Activated B cell treated with CpG ODN at 0.5 μM for 24 hours (primary cell): ENCODE measurements at regions of chr21 and their contacts with region 1.

Region 1: DNA sequence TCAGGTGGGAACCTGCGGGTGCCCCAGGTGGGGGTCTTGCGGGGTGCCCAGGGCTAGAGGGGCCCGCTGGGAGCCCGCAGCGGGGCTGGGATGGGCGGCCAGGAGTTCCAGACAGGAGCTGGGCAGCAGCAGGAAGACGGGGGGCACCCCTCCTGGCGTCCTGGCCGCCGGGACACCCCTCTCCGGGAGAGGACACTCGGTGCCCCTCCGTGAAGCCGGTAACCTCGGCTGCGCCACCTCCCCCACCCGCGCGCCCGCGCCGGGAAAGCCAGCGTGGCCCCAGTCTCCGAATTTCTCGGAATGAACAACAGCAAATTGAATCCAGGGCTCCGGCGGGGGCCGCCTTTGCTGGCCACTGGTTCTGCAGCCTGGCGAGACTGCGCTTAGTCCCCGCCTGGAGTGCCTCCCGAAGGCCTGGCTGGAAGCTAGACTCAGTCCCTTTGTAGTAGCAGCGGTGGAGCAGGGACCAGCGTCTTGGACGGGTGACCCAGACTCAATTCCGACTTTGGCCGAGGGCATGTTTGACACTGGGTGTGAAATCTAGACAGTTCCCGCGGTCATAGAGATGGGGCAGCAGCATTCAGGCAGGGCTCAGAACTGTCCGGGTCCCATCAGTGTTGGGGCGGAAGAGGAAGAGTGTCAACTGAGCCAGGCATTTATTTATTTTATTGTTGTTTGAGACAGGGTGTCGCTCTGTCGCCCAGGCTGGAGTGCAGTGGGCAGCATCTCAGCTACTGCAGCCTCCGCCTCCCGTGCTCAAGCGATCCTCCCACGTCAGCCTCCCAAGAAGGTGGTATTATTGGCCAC is 769 bp downstream of the IFNGR2 start:
- DNase-seq: peak; percentile 39
- ATAC-seq: peak; percentile 43
- H3K4me3 Mint-ChIP-seq: peak overlapping the region; percentile 95
- H3K27ac Mint-ChIP-seq: peak overlapping the region; percentile 94
- H3K4me1 Mint-ChIP-seq: peaks cover 80% of the 10 kb centered on the region
- H3K27me3 Mint-ChIP-seq: no peaks in the 10 kb centered on the region
- CTCF ChIP-seq: no peak

Region 2: GRCh38 chr21:31837618-31838390 is 1566.2 kb before region 1 on chr21:
- CTCF ChIA-PET with region 1: no interaction called
- POLR2A ChIA-PET with region 1: interaction called, 10 read pairs
- intact Hi-C with region 1: no loop called
- DNase-seq: no peak
- ATAC-seq: peak; percentile 80
- H3K4me3 Mint-ChIP-seq: no peak overlapping the region
- H3K27ac Mint-ChIP-seq: no peak overlapping the region
- H3K4me1 Mint-ChIP-seq: peaks cover 9% of the 10 kb centered on the region
- H3K27me3 Mint-ChIP-seq: peaks cover 12% of the 10 kb centered on the region
- CTCF ChIP-seq: no peak

Region 3: GRCh38 chr21:33219954-33220353 is 184.0 kb before region 1 on chr21:
- CTCF ChIA-PET with region 1: no interaction called
- POLR2A ChIA-PET with region 1: no interaction called
- intact Hi-C with region 1: no loop called
- DNase-seq: no peak
- ATAC-seq: no peak
- H3K4me3 Mint-ChIP-seq: no peak overlapping the region
- H3K27ac Mint-ChIP-seq: no peak overlapping the region
- H3K4me1 Mint-ChIP-seq: peaks cover 40% of the 10 kb centered on the region
- H3K27me3 Mint-ChIP-seq: no peaks in the 10 kb centered on the region
- CTCF ChIP-seq: no peak

Region 4: DNA sequence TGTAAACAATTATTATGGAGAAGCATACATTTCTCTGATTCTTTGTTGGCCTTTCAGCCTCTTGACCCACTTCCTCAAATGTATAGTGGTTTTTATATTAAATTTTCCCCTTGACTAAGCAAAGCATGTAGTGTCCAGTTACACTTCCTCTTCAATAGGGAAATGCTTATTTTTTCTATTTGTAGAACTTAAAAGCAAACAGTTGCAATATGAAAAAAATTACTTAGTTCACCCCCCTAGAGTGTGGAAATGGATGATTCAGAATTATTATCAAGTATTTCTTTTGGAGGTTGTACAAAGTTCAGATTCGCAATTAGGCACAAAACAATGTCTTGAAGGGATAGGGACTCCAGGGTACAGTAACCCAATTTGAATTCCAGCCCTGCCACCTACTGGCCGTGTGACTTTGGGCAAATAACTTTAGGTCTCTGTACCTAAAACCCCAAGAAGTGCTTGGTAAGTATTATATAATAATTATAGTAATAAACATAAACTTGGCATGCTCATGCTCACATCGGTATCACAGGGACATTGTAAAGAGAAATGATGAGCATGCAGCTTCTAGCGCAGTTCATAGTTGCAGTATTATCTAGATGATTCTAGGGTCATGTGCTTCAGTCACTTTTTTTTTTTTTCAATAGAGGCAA is 29.4 kb before region 1 on chr21:
- CTCF ChIA-PET with region 1: no interaction called
- POLR2A ChIA-PET with region 1: interaction called, 93 read pairs
- intact Hi-C with region 1: loop called (anchors 1 kb)
- DNase-seq: no peak
- ATAC-seq: peak; percentile 72
- H3K4me3 Mint-ChIP-seq: peak overlapping the region; percentile 59
- H3K27ac Mint-ChIP-seq: peak overlapping the region; percentile 87
- H3K4me1 Mint-ChIP-seq: peaks cover 79% of the 10 kb centered on the region
- H3K27me3 Mint-ChIP-seq: no peaks in the 10 kb centered on the region
- CTCF ChIP-seq: no peak

Region 5: GRCh38 chr21:33380483-33380998 is 23.4 kb before region 1 on chr21:
- CTCF ChIA-PET with region 1: no interaction called
- POLR2A ChIA-PET with region 1: interaction called, 93 read pairs
- intact Hi-C with region 1: loop called (anchors 1 kb)
- DNase-seq: peak; percentile 59
- ATAC-seq: peak; percentile 63
- H3K4me3 Mint-ChIP-seq: peak overlapping the region; percentile 59
- H3K27ac Mint-ChIP-seq: peak overlapping the region; percentile 97
- H3K4me1 Mint-ChIP-seq: peaks cover 84% of the 10 kb centered on the region
- H3K27me3 Mint-ChIP-seq: no peaks in the 10 kb centered on the region
- CTCF ChIP-seq: no peak

Region 6: GRCh38 chr21:33434770-33435360 is 30.9 kb after region 1 on chr21:
- CTCF ChIA-PET with region 1: interaction called, 4 read pairs
- POLR2A ChIA-PET with region 1: interaction called, 8 read pairs
- intact Hi-C with region 1: loop called (anchors 2 kb)
- DNase-seq: no peak
- ATAC-seq: peak; percentile 90
- H3K4me3 Mint-ChIP-seq: peak overlapping the region; percentile 55
- H3K27ac Mint-ChIP-seq: peak overlapping the region; percentile 88
- H3K4me1 Mint-ChIP-seq: peaks cover 64% of the 10 kb centered on the region
- H3K27me3 Mint-ChIP-seq: no peaks in the 10 kb centered on the region
- CTCF ChIP-seq: no peak

Region 7: GRCh38 chr21:33598051-33598450 is 194.1 kb after region 1 on chr21:
- CTCF ChIA-PET with region 1: no interaction called
- POLR2A ChIA-PET with region 1: no interaction called
- intact Hi-C with region 1: no loop called
- DNase-seq: no peak
- ATAC-seq: no peak
- H3K4me3 Mint-ChIP-seq: no peak overlapping the region
- H3K27ac Mint-ChIP-seq: no peak overlapping the region
- H3K4me1 Mint-ChIP-seq: no peaks in the 10 kb centered on the region
- H3K27me3 Mint-ChIP-seq: no peaks in the 10 kb centered on the region
- CTCF ChIP-seq: no peak